ENCODE measurements at regions of chr4 and their contacts with region 1.

Region 1: GRCh38 chr4:88823058-88823919 is 125.7 kb upstream of the NAP1L5 start:
- DNase-seq: peak; percentile 87 to 93 (median 91)
- H3K4me3 ChIP-seq: peak overlapping the region; percentile 51
- H3K27ac ChIP-seq: peak overlapping the region; percentile 11 to 91
- H3K4me1 ChIP-seq: no peaks in the 10 kb centered on the region
- H3K27me3 ChIP-seq: no peaks in the 10 kb centered on the region
- CTCF ChIP-seq: no peak
- EP300 ChIP-seq: no peak
- POLR2A ChIP-seq: peak; percentile 57

Region 2: GRCh38 chr4:88706574-88706973 is 116.7 kb before region 1 on chr4:
- intact Hi-C with region 1: loop called in 2 of 4 experiments (anchors 10 kb)
- DNase-seq: peak; percentile 28 to 49 (median 36)
- H3K4me3 ChIP-seq: no peak overlapping the region
- H3K27ac ChIP-seq: no peak overlapping the region
- H3K4me1 ChIP-seq: no peaks in the 10 kb centered on the region
- H3K27me3 ChIP-seq: no peaks in the 10 kb centered on the region
- CTCF ChIP-seq: peak; percentile 39 to 55 (median 47)
- EP300 ChIP-seq: no peak
- POLR2A ChIP-seq: no peak

Measured in ovary (tissue), 10 donors.